Activated CD4-positive, alpha-beta memory T cell treated with anti-CD3 and anti-CD28 coated beads, Interleukin-2, amount 10 ng/mL, durations not matched to agents 7 days and 5 days (primary cell): ENCODE measurements at regions of chr16 and their contacts with region 1.

Region 1: GRCh38 chr16:30032083-30032819 is 1.2 kb upstream of the TLCD3B start:
- DNase-seq: peak; percentile 72
- H3K4me3 Mint-ChIP-seq: no peak overlapping the region
- H3K27ac Mint-ChIP-seq: no peak overlapping the region
- H3K4me1 Mint-ChIP-seq: peaks cover 25% of the 10 kb centered on the region
- H3K27me3 Mint-ChIP-seq: peaks cover 45% of the 10 kb centered on the region

Region 2: DNA sequence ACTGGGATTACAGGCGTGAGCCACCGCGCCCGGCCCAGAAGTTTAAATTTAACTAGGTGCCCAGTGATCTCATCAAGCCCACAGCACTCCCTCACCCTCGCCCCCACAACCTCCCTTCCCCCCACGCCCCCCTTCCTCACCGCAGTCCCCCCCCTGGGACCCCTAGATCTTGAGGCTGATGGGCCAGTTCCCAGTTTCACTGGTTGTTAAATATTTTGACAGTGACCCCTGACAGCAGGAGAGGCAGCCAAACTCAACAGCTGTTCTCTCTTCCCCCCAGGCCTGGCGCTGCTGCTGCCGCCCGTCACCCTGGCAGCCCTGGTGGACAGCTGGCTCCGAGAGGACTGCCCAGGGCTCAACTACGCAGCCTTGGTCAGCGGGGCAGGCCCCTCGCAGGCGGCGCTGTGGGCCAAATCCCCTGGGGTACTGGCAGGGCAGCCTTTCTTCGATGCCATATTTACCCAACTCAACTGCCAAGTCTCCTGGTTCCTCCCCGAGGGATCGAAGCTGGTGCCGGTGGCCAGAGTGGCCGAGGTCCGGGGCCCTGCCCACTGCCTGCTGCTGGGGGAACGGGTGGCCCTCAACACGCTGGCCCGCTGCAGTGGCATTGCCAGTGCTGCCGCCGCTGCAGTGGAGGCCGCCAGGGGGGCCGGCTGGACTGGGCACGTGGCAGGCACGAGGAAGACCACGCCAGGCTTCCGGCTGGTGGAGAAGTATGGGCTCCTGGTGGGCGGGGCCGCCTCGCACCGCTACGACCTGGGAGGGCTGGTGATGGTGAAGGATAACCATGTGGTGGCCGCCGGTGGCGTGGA is 337.7 kb before region 1 on chr16:
- CTCF ChIA-PET with region 1: interaction called, 33 read pairs
- POLR2A ChIA-PET with region 1: interaction called, 3 read pairs
- DNase-seq: no peak
- H3K4me3 Mint-ChIP-seq: no peak overlapping the region
- H3K27ac Mint-ChIP-seq: no peak overlapping the region
- H3K4me1 Mint-ChIP-seq: peaks cover 16% of the 10 kb centered on the region
- H3K27me3 Mint-ChIP-seq: no peaks in the 10 kb centered on the region

Region 3: DNA sequence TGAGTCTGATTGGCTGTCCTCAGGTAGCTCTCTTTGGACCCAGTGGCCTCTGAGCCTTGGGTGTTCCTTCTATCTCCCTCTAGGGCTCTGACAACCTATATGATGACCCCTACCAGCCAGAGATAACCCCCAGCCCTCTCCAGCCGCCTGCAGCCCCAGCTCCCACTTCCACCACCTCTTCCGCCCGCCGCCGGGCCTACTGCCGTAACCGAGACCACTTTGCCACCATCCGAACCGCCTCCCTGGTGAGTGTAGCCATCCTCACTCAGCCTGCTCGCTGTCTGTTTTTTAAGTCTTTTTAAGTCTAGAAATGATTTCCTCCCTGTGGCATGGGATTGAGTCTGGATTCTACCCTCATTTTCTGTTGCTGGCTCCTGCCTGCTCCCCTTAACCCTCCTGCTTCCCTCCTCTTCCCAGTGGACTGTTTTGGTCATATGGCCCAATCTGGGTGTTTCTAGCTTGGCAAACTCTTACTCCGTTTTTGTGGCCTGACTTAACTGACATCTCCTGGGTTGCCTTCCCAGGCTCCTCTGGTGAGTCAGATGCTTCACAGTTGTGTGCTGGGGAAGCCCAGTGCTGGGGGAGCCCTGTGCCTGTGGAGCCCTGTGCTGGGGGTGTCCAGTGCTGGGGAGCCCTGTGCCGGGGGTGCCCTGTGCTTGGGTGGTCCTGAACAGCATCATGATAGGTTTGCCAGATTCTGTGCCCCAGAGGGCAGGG is 48.7 kb before region 1 on chr16:
- CTCF ChIA-PET with region 1: no interaction called
- POLR2A ChIA-PET with region 1: no interaction called
- DNase-seq: no peak
- H3K4me3 Mint-ChIP-seq: no peak overlapping the region
- H3K27ac Mint-ChIP-seq: no peak overlapping the region
- H3K4me1 Mint-ChIP-seq: no peaks in the 10 kb centered on the region
- H3K27me3 Mint-ChIP-seq: no peaks in the 10 kb centered on the region